Testis (tissue), 5 donors: ENCODE measurements at regions of chr10 and their contacts with region 1.

Region 1: GRCh38 chr10:63629363-63630084 is 108.3 kb downstream of the REEP3 start:
- DNase-seq: peak; percentile 96
- H3K4me3 ChIP-seq: peak overlapping the region; percentile 69 to 73
- H3K27ac ChIP-seq: peak overlapping the region; percentile 79 to 80
- H3K4me1 ChIP-seq: peaks cover 12% of the 10 kb centered on the region
- H3K27me3 ChIP-seq: no peaks in the 10 kb centered on the region
- CTCF ChIP-seq: peak; percentile 41 to 64 (median 60)
- POLR2A ChIP-seq: no peak

Region 2: GRCh38 chr10:63711867-63712716 is 82.6 kb after region 1 on chr10:
- intact Hi-C with region 1: loop called (anchors 5 kb)
- DNase-seq: peak; percentile 89
- H3K4me3 ChIP-seq: no peak overlapping the region
- H3K27ac ChIP-seq: peak overlapping the region in 1 of 2 donors; percentile 72
- H3K4me1 ChIP-seq: peaks cover 40% of the 10 kb centered on the region
- H3K27me3 ChIP-seq: no peaks in the 10 kb centered on the region
- CTCF ChIP-seq: no peak
- POLR2A ChIP-seq: no peak